Ascending aorta (tissue), 2 donors: ENCODE measurements at regions of chr9 and their contacts with region 1.

Region 1: GRCh38 chr9:76530458-76531110 is 71.6 kb downstream of the GCNT1 start:
- DNase-seq: no peak
- H3K4me3 ChIP-seq: no peak overlapping the region
- H3K27ac ChIP-seq: peak overlapping the region in 1 of 2 donors; percentile 32
- H3K4me1 ChIP-seq: no peaks in the 10 kb centered on the region
- H3K27me3 ChIP-seq: no peaks in the 10 kb centered on the region
- CTCF ChIP-seq: no peak

Region 2: DNA sequence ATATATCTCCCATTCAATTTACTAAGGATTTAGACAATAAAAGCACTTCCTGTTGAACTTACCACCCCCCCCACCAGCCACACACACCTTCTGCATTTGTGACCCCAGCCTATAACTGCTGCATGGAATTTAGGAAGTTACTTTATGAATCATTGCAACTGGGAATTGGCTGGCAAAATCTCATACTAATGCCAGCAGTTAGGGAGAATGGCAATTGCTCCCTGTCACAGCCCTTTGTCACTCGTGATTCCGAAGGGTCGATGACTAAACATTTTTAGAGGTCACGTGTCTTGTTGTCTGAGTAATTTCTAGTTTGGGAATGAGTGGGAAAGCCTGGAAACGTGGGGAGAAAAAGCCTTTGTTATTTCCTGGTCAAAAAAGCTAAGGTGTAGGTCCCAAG is 187.0 kb after region 1 on chr9:
- intact Hi-C with region 1: loop called (anchors 10 kb)
- DNase-seq: peak in 1 of 2 donors; percentile 78
- H3K4me3 ChIP-seq: no peak overlapping the region
- H3K27ac ChIP-seq: peak overlapping the region; percentile 49 to 67
- H3K4me1 ChIP-seq: peaks cover 0 to 10% of the 10 kb centered on the region in 2 donors
- H3K27me3 ChIP-seq: no peaks in the 10 kb centered on the region
- CTCF ChIP-seq: no peak